ENCODE measurements at regions of chr19 and their contacts with region 1.

Region 1: GRCh38 chr19:18281082-18282020 is at the start of gene JUND:
- DNase-seq: peak; percentile 98
- ATAC-seq: peak; percentile 68
- H3K4me3 Mint-ChIP-seq: peak within 1 kb of the TSS; percentile 96
- H3K27ac Mint-ChIP-seq: peak within 1 kb of the TSS; percentile 97
- H3K4me1 Mint-ChIP-seq: peaks cover 54% of the 10 kb centered on the region
- H3K27me3 Mint-ChIP-seq: no peaks in the 10 kb centered on the region
- total RNA-seq, gene JUND: 498 to 501 TPM

Region 2: DNA sequence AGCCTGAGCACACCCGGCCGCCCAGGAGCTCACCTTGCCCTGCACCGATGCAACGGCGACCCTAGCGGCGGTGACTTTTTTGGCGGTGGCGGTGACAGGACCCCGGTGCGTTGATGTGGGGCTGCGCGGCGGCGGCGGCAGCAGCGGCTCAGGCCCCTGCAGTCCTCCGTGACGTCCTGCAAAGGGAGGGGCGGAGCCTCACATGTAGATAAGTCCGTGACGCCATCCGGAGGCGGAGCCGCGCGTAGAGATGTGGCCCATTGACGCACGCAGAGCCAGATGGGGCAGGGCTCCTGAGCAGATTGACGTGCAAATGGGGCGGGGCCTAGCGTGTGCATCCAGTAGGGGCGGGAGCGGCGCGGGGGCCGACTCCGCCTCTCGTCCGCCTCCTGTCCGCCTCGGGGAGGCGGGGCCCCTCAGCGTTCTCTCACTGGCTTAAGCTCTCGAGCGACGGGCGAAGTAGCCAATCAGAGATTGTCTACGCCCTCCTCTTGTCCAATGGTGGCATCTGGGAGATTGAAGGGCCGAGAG is 77.4 kb before region 1 on chr19 and contains the start of gene RAB3A:
- CTCF ChIA-PET with region 1: interaction called, 21 read pairs
- DNase-seq: peak; percentile 100
- ATAC-seq: peak; percentile 93
- H3K4me3 Mint-ChIP-seq: peak within 1 kb of the TSS; percentile 83
- H3K27ac Mint-ChIP-seq: peak within 1 kb of the TSS; percentile 91
- H3K4me1 Mint-ChIP-seq: peaks cover 17% of the 10 kb centered on the region
- H3K27me3 Mint-ChIP-seq: peaks cover 5% of the 10 kb centered on the region
- total RNA-seq, gene RAB3A: 3.5 to 3.7 TPM

Region 3: GRCh38 chr19:18269070-18269723 is 12.2 kb before region 1 on chr19:
- CTCF ChIA-PET with region 1: interaction called, 19 read pairs
- DNase-seq: no peak
- ATAC-seq: no peak
- H3K4me3 Mint-ChIP-seq: no peak overlapping the region
- H3K27ac Mint-ChIP-seq: no peak overlapping the region
- H3K4me1 Mint-ChIP-seq: peaks cover 9% of the 10 kb centered on the region
- H3K27me3 Mint-ChIP-seq: no peaks in the 10 kb centered on the region

Region 4: DNA sequence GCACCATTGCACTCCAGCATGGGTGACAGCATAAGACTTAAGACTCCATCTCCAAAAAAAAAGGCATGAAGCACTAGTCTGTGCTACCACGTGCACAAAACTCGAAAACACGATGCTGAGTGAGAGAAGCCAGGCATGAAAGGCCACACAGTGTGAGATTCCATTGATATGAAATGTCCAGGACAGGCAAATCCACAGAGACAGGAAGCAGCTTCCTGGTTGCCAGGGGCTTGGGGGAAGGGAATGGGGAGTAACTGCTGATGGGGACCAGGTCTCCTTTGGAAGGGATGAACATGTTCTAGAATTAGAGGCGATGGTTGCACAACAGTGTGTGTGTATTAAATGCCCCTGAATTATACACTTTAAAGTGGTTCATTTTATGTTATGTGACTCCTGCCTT is 16.0 kb after region 1 on chr19:
- CTCF ChIA-PET with region 1: interaction called, 229 read pairs
- DNase-seq: no peak
- ATAC-seq: no peak
- H3K4me3 Mint-ChIP-seq: no peak overlapping the region
- H3K27ac Mint-ChIP-seq: peak overlapping the region; percentile 44
- H3K4me1 Mint-ChIP-seq: peaks cover 51% of the 10 kb centered on the region
- H3K27me3 Mint-ChIP-seq: no peaks in the 10 kb centered on the region

Region 5: GRCh38 chr19:18322759-18323460 is 41.6 kb after region 1 on chr19 and contains the start of gene LSM4:
- CTCF ChIA-PET with region 1: interaction called, 399 read pairs
- DNase-seq: peak; percentile 100
- ATAC-seq: peak; percentile 95
- H3K4me3 Mint-ChIP-seq: peak within 1 kb of the TSS; percentile 92
- H3K27ac Mint-ChIP-seq: peak within 1 kb of the TSS; percentile 97
- H3K4me1 Mint-ChIP-seq: peaks cover 55% of the 10 kb centered on the region
- H3K27me3 Mint-ChIP-seq: no peaks in the 10 kb centered on the region
- total RNA-seq, gene LSM4: 209 to 236 TPM

Region 6: DNA sequence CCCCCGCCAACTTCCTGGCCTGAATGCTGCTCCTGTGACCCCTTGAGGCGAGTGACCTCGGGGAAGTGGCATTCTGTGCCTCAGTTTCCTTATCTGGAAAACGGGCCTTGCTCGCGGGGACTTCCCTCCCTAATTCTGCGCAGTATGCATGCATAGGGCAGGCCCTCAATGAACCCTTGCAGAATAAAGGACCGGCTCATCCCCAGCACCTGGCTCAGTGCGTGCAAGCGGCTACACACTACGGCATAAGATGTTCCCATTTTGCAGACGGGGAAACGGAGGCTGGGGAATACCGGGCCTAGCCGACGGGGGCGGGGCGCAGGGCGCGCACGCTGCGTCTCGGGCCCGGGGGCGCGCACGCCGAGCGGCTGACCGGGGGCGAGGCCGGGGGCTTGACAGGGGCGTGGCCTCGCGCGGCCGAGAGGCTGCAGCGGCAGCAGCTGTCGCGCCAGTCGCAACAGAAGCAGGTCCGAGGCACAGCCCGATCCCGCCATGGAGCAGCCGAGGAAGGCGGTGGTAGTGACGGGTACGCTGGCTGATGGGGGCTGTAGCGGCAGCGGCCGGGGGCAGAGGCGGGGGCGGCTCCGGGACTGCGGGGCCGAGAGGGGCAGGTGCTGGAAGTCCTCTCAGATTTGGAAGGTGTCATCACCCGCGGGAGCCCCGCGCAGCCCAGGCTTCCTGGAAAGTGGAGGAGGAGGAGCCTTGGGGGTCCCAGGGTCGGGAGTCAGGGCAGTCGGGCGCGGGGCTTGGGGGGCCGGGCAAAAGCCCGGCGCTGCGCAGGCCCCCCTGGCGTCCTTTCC is 59.0 kb after region 1 on chr19 and contains the start of gene PGPEP1:
- CTCF ChIA-PET with region 1: interaction called, 78 read pairs
- DNase-seq: peak; percentile 73
- ATAC-seq: peak; percentile 71
- H3K4me3 Mint-ChIP-seq: peak within 1 kb of the TSS; percentile 72
- H3K27ac Mint-ChIP-seq: peak within 1 kb of the TSS; percentile 84
- H3K4me1 Mint-ChIP-seq: peaks cover 17% of the 10 kb centered on the region
- H3K27me3 Mint-ChIP-seq: no peaks in the 10 kb centered on the region
- total RNA-seq, gene PGPEP1: 35.5 to 44.7 TPM

Region 7: DNA sequence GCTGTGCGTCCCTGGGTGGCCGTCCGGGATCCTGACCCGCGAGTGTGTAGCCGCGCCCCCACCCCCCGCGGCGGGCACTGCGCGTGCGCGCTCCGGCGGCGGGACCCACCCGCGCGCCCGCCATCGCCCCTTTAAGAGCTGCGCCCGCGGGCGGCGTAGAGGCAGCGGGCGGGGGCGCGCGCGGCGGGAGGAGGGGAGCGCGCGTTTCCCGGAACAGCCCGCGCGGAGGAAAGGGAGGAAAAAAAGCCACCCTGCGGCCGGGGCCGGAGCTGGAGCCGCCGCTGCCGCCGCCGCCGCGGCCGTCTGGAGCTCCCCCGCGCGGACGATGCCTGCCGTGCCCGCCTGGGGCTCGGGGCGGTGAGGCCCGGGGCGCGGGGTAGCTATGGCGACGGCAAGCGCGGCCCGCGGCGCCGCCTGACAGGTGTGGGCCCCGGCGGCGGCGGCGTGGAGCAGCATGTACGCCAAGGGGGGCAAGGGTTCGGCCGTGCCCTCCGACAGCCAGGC is 137.9 kb after region 1 on chr19 and contains the start of gene SSBP4:
- CTCF ChIA-PET with region 1: interaction called, 127 read pairs
- DNase-seq: peak; percentile 79
- ATAC-seq: peak; percentile 31
- H3K4me3 Mint-ChIP-seq: peak within 1 kb of the TSS; percentile 97
- H3K27ac Mint-ChIP-seq: peak within 1 kb of the TSS; percentile 93
- H3K4me1 Mint-ChIP-seq: peaks cover 81% of the 10 kb centered on the region
- H3K27me3 Mint-ChIP-seq: peaks cover 3% of the 10 kb centered on the region
- total RNA-seq, gene SSBP4: 197 to 247 TPM